Activated CD4-positive, alpha-beta T cell treated with anti-CD3 and anti-CD28 coated beads for 36 hours (primary cell): ENCODE measurements at regions of chr7 and their contacts with region 1.

Region 1: GRCh38 chr7:32495298-32496176 is at the start of gene AVL9:
- DNase-seq: peak; percentile 99
- ATAC-seq: peak; percentile 97
- H3K4me3 Mint-ChIP-seq: peak within 1 kb of the TSS; percentile 87
- H3K27ac Mint-ChIP-seq: peak within 1 kb of the TSS; percentile 96
- H3K4me1 Mint-ChIP-seq: peaks cover 36% of the 10 kb centered on the region
- H3K27me3 Mint-ChIP-seq: no peaks in the 10 kb centered on the region
- total RNA-seq, gene AVL9: 37.4 to 56.6 TPM

Region 2: GRCh38 chr7:30594549-30595435 is 1900.7 kb before region 1 on chr7 and contains the start of gene GARS1:
- CTCF ChIA-PET with region 1: no interaction called
- POLR2A ChIA-PET with region 1: no interaction called
- intact Hi-C with region 1: loop called (anchors 10 kb)
- DNase-seq: peak; percentile 94
- ATAC-seq: peak; percentile 84
- H3K4me3 Mint-ChIP-seq: peak within 1 kb of the TSS; percentile 100
- H3K27ac Mint-ChIP-seq: peak within 1 kb of the TSS; percentile 100
- H3K4me1 Mint-ChIP-seq: peaks cover 51% of the 10 kb centered on the region
- H3K27me3 Mint-ChIP-seq: no peaks in the 10 kb centered on the region
- total RNA-seq, gene GARS1: 391 to 439 TPM

Region 3: DNA sequence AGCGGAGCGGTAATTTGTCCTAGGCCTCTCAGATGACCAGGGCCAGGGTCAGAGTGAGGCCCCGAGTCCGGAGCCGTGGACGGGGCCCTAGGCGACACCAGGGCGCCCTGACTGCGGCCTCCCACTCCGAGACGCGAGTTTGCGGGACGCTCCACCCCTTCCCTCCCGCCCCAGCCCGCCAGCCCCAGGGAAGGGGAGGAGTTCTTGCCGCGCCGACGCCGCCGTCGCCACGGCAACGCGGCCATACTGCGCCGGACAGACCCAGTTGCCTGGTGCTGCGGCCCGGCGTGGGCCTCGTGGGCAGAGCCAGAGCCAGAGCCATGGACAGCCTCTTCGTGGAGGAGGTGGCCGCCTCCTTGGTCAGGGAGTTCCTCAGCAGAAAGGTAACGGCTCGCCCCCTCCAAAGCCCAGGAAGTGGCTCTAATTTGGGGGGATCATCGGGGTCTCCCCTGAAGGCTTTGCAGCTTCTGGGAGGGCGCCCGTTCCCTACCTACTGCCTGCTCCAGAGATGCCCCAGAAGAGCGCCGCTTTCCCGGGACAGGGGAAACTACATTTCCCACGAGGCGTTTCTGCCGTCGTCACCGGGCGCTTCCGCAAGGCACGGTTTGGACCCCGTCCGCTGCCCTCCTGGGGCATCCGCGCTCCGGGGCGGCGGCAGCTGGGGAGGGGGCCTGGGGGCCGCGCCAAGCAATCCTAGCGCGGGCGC is 1724.2 kb before region 1 on chr7 and contains the start of gene MINDY4:
- CTCF ChIA-PET with region 1: no interaction called
- POLR2A ChIA-PET with region 1: no interaction called
- intact Hi-C with region 1: loop called in 1 of 2 experiments (anchors 10 kb)
- DNase-seq: peak; percentile 86
- ATAC-seq: peak; percentile 96
- H3K4me3 Mint-ChIP-seq: peak within 1 kb of the TSS; percentile 75
- H3K27ac Mint-ChIP-seq: peak within 1 kb of the TSS; percentile 74
- H3K4me1 Mint-ChIP-seq: peaks cover 11% of the 10 kb centered on the region
- H3K27me3 Mint-ChIP-seq: no peaks in the 10 kb centered on the region
- total RNA-seq, gene MINDY4: 1.4 to 1.7 TPM

Region 4: GRCh38 chr7:32518534-32519140 is 23.1 kb after region 1 on chr7:
- CTCF ChIA-PET with region 1: interaction called, 7 read pairs
- POLR2A ChIA-PET with region 1: no interaction called
- intact Hi-C with region 1: loop called in 1 of 2 experiments (anchors 2 kb)
- DNase-seq: no peak
- ATAC-seq: no peak
- H3K4me3 Mint-ChIP-seq: no peak overlapping the region
- H3K27ac Mint-ChIP-seq: no peak overlapping the region
- H3K4me1 Mint-ChIP-seq: peaks cover 47% of the 10 kb centered on the region
- H3K27me3 Mint-ChIP-seq: no peaks in the 10 kb centered on the region

Region 5: GRCh38 chr7:32694182-32694581 is 198.6 kb after region 1 on chr7:
- CTCF ChIA-PET with region 1: no interaction called
- POLR2A ChIA-PET with region 1: no interaction called
- intact Hi-C with region 1: no loop called
- DNase-seq: no peak
- ATAC-seq: no peak
- H3K4me3 Mint-ChIP-seq: no peak overlapping the region
- H3K27ac Mint-ChIP-seq: no peak overlapping the region
- H3K4me1 Mint-ChIP-seq: peaks cover 6% of the 10 kb centered on the region
- H3K27me3 Mint-ChIP-seq: peaks cover 3% of the 10 kb centered on the region

Region 6: DNA sequence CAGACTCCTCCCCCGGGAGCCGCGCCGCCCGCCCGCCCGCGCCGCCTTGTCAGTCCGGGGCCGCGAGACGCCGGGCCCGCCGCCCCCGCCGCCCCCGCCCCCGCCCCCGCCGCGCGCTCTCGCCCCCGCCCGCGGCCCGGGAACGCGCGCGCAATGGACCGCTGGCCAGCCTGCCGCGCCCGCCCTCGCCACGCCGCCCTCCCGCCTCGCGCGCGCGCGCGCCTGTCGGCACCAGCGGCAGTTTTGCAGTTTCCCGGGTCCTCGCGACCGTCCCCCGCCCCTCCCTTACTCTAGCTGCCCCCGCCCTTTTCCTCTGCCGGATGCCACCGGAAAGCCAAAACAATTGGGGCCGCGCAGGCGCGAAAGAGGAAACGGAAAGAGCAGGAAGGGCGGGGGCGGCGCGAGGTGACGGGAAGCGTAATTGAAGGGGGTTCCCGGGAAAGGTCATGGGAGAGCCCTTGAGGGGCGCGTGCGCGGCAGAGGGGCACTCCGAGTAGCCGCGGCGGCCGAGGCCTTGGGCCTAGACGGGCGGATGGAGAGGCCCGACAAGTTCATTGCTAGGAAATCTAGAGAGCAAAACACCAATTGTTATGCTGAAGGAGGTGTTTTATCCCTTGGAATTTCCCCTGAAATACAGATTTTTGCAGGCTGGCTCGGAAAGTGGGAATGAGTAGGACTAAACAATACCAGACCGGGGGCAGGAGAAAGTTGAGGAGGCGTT is 396.4 kb after region 1 on chr7:
- CTCF ChIA-PET with region 1: no interaction called
- POLR2A ChIA-PET with region 1: no interaction called
- intact Hi-C with region 1: loop called (anchors 1 to 5 kb)
- DNase-seq: peak; percentile 99
- ATAC-seq: peak; percentile 67
- H3K4me3 Mint-ChIP-seq: peak overlapping the region; percentile 94
- H3K27ac Mint-ChIP-seq: peak overlapping the region; percentile 99
- H3K4me1 Mint-ChIP-seq: peaks cover 44% of the 10 kb centered on the region
- H3K27me3 Mint-ChIP-seq: no peaks in the 10 kb centered on the region

Region 7: DNA sequence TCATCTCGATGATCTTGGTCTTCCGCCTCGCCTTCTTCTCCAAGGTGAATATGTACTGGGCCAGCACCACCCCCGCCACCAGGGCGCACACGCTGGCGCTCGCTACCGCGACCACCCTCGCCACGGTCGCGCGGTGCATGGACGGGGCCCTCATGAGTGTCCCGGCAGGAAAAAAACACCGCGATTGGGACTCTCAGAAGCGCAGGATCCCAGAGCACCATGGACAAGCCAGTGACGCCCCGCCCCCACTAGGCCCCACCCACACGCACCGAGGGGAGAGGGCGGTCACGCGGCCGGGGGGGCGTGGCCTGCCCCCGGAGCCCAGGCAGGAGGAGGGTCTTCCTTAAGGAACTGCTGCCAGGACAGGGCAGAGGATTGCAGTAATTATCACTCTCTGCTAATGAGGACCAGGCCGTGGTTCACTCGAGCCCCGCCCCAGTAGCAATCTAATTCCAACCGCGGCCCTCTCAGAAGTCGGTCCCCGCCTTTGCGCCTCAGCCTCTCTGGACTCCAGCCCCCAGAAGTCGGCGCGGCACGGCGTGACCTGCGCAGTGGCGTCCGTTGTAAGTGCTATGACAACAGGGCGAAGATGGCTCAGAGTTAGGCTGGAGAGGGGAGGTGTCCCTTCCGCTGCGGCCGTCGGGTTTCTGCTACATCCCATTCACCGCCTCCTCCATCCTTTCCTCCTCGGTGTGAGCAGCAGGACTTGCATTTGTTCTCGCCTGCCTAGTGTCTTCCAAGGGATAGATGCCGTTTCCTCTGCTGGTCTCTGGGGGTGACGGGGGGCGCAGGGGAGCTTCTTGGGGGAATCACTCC is 633.7 kb after region 1 on chr7 and contains the start of gene BBS9:
- CTCF ChIA-PET with region 1: interaction called, 3 read pairs
- POLR2A ChIA-PET with region 1: no interaction called
- intact Hi-C with region 1: loop called (anchors 1 to 2 kb)
- DNase-seq: peak; percentile 96
- ATAC-seq: peak; percentile 99
- H3K4me3 Mint-ChIP-seq: peak within 1 kb of the TSS; percentile 95
- H3K27ac Mint-ChIP-seq: peak within 1 kb of the TSS; percentile 89
- H3K4me1 Mint-ChIP-seq: peaks cover 16% of the 10 kb centered on the region
- H3K27me3 Mint-ChIP-seq: no peaks in the 10 kb centered on the region
- total RNA-seq, gene BBS9: 4.1 to 9.9 TPM